Activated naive CD8-positive, alpha-beta T cell treated with anti-CD3 and anti-CD28 coated beads, Interleukin-2, amount 10 ng/mL, durations not matched to agents 7 days and 5 days (primary cell): ENCODE measurements at regions of chr11 and their contacts with region 1.

Region 1: GRCh38 chr11:111378861-111379601 is at the start of gene POU2AF1:
- DNase-seq: peak; percentile 81
- ATAC-seq: peak; percentile 94
- H3K4me3 Mint-ChIP-seq: peak within 1 kb of the TSS; percentile 85
- H3K27ac Mint-ChIP-seq: peak within 1 kb of the TSS; percentile 97
- H3K4me1 Mint-ChIP-seq: peaks cover 28% of the 10 kb centered on the region
- H3K27me3 Mint-ChIP-seq: no peaks in the 10 kb centered on the region
- total RNA-seq, gene POU2AF1: 1.9 to 2.1 TPM

Region 2: DNA sequence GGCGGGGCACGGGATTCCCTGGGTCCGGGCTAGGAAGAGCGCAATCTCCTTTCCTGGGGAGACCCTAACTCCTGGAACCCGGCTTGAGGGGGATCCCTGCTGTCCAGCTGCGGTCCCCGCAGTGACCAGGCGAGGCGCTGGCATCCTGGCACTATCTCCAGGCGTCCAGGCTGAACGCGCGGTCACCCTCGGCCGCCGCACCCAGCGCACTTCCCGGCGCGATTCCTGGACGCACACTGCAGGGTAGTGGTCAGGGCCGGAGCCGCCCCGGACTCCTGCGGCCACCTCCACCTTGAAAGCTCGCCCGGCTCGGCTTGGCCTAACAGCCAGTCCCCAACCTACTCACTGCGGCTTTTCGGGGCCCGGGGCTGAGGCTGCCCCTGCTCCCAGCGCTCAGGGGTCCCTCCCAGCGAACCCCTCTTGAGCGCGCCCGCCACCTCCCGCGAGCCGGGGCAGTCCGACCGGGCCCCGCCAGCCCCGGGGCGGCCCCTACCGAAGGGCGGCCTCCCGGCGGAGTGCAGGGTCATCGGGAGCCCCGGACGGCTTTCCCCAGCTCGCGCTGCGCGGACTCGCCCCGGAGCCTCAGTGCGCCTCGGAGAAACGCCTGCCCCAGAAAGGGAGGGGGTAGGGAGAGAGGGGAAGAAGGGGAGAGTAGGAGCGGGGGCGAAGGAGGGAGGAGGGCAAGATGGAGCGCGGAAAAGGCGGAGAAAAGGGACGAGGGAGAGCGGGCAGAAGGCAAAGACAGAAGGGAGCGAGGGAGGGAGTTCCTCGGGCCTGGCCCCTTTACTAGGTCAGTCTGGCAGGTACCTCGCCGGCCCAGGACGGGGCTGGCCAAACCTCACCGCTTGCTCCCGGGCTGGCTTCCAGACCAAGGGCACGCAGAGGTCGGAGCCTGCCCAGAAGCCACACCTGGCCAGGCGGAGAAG is 79.7 kb before region 1 on chr11:
- POLR2A ChIA-PET with region 1: no interaction called
- DNase-seq: peak; percentile 42
- ATAC-seq: peak; percentile 51
- H3K4me3 Mint-ChIP-seq: peak overlapping the region; percentile 42
- H3K27ac Mint-ChIP-seq: no peak overlapping the region
- H3K4me1 Mint-ChIP-seq: peaks cover 2% of the 10 kb centered on the region
- H3K27me3 Mint-ChIP-seq: peaks cover 59% of the 10 kb centered on the region

Region 3: DNA sequence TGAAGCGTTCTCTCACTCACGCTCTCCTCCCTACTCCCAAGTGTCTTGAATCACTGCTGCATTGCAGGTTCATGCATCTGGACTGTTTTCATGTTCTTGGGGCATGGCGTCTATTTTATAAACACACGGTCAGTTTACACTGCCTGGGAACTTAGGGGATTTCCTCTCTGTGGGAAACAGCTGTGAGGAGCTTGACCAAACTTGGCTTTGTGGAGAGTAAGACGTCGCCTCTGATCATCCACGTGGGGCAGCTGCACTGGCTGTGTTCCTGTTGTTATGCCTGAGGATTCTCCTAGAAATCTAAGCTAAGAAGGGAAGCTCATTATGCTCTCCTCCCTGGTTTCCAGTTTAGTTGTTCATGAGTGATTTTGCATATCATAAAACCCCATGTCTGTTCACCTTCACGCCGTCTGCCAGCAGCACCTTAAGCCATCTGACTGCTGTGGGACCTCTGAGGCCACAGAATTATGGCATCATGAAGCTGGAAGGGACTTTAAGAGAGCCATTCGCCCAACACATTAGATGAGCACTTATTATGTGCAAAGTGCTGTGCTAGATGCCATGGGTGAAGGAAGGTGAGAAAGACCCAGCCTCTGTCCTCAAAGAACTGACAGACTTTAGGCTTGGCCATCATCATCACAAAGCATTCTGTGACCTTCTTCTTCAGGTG is 38.9 kb after region 1 on chr11:
- POLR2A ChIA-PET with region 1: interaction called, 17 read pairs
- DNase-seq: no peak
- ATAC-seq: no peak
- H3K4me3 Mint-ChIP-seq: peak overlapping the region; percentile 40
- H3K27ac Mint-ChIP-seq: peak overlapping the region; percentile 90
- H3K4me1 Mint-ChIP-seq: peaks cover 51% of the 10 kb centered on the region
- H3K27me3 Mint-ChIP-seq: no peaks in the 10 kb centered on the region

Region 4: GRCh38 chr11:111454561-111455192 is 75.6 kb after region 1 on chr11:
- POLR2A ChIA-PET with region 1: no interaction called
- DNase-seq: peak; percentile 78
- ATAC-seq: peak; percentile 83
- H3K4me3 Mint-ChIP-seq: no peak overlapping the region
- H3K27ac Mint-ChIP-seq: no peak overlapping the region
- H3K4me1 Mint-ChIP-seq: peaks cover 4% of the 10 kb centered on the region
- H3K27me3 Mint-ChIP-seq: peaks cover 6% of the 10 kb centered on the region